Activated CD4-positive, alpha-beta T cell treated with anti-CD3 and anti-CD28 coated beads for 36 hours (primary cell): ENCODE measurements at regions of chr7 and their contacts with region 1.

Region 1: GRCh38 chr7:18345641-18346234 is 149.8 kb upstream of the HDAC9 start:
- DNase-seq: peak; percentile 49
- ATAC-seq: peak; percentile 33
- H3K4me3 Mint-ChIP-seq: no peak overlapping the region
- H3K27ac Mint-ChIP-seq: no peak overlapping the region
- H3K4me1 Mint-ChIP-seq: no peaks in the 10 kb centered on the region
- H3K27me3 Mint-ChIP-seq: peaks cover 5% of the 10 kb centered on the region

Region 2: DNA sequence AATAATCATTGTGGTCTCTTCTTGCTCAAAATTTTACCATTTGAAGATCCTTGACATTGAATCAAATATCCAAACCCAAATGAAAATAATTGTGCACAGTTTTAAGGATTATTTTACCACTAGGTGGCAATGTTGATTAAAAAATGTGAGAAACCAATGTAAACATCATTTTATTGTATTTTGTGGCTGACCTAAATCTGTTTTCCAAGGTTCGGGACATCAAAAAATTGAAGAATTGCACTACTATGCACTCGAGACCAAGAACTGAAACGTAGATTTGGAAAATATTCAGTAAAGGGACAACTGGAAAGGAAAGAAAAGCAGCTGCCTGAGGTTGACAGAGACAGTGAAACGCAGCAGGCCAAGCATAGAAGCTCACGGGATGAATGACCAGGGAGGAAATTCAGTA is 664.8 kb before region 1 on chr7:
- CTCF ChIA-PET with region 1: interaction called, 8 read pairs
- POLR2A ChIA-PET with region 1: no interaction called
- intact Hi-C with region 1: loop called (anchors 1 kb)
- DNase-seq: no peak
- ATAC-seq: no peak
- H3K4me3 Mint-ChIP-seq: no peak overlapping the region
- H3K27ac Mint-ChIP-seq: no peak overlapping the region
- H3K4me1 Mint-ChIP-seq: no peaks in the 10 kb centered on the region
- H3K27me3 Mint-ChIP-seq: no peaks in the 10 kb centered on the region

Region 3: DNA sequence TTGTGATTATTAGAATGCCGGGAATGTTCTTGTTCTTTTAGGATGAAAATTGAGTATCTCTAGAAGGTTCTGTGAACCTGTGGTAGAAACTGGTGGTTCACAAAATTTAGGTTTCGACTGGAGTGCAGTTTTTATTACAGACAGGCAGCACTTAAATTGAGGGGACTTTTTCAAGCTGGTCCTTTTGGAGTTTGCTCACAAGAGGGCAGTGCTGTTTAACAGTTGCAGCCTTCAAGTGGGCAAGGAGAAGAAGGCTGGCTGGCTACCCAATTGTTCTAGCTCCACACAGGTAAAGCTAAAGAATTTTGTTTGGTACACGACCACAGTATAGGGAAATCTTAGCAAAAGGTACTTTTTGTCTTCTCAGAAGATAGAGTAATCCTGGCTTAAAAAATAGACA is 639.0 kb before region 1 on chr7:
- CTCF ChIA-PET with region 1: no interaction called
- POLR2A ChIA-PET with region 1: no interaction called
- intact Hi-C with region 1: loop called (anchors 2 to 5 kb)
- DNase-seq: peak; percentile 55
- ATAC-seq: peak; percentile 71
- H3K4me3 Mint-ChIP-seq: no peak overlapping the region
- H3K27ac Mint-ChIP-seq: no peak overlapping the region
- H3K4me1 Mint-ChIP-seq: no peaks in the 10 kb centered on the region
- H3K27me3 Mint-ChIP-seq: peaks cover under 1% of the 10 kb centered on the region

Region 4: GRCh38 chr7:17769918-17770317 is 575.8 kb before region 1 on chr7:
- CTCF ChIA-PET with region 1: interaction called, 20 read pairs
- POLR2A ChIA-PET with region 1: no interaction called
- intact Hi-C with region 1: loop called (anchors 1 kb)
- DNase-seq: peak; percentile 75
- ATAC-seq: peak; percentile 64
- H3K4me3 Mint-ChIP-seq: no peak overlapping the region
- H3K27ac Mint-ChIP-seq: no peak overlapping the region
- H3K4me1 Mint-ChIP-seq: peaks cover 3% of the 10 kb centered on the region
- H3K27me3 Mint-ChIP-seq: no peaks in the 10 kb centered on the region

Region 5: DNA sequence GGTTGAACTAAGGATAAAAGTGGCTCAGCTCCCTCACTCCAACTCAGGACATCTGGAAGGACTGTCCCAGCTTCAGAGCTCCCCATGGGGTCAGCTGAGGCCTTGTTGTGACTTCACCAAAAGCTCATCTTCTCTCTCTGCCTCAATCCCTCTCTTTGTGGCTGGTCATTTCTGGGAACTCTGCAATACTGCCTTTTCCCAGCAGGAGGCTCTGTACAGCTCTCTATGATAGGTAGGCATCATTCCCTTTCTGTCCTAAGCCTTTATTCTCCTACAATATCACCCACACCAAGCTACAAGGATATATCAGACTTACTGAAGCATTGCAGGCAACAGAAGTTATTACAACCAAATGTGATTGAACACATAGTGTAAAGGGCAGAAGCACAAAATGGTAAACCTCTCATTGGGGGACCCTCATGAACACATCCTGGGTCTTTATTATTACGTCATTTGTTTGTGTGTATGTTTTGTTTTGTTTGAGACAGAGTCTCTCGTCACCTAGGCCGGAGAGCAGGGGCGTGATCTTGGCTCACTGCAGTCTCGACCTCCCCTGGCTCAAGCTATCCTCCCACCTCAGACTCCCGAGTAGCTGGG is 281.4 kb before region 1 on chr7:
- CTCF ChIA-PET with region 1: no interaction called
- POLR2A ChIA-PET with region 1: no interaction called
- intact Hi-C with region 1: loop called in 1 of 2 experiments (anchors 2 kb)
- DNase-seq: peak; percentile 39
- ATAC-seq: no peak
- H3K4me3 Mint-ChIP-seq: no peak overlapping the region
- H3K27ac Mint-ChIP-seq: no peak overlapping the region
- H3K4me1 Mint-ChIP-seq: no peaks in the 10 kb centered on the region
- H3K27me3 Mint-ChIP-seq: peaks cover 2% of the 10 kb centered on the region

Region 6: DNA sequence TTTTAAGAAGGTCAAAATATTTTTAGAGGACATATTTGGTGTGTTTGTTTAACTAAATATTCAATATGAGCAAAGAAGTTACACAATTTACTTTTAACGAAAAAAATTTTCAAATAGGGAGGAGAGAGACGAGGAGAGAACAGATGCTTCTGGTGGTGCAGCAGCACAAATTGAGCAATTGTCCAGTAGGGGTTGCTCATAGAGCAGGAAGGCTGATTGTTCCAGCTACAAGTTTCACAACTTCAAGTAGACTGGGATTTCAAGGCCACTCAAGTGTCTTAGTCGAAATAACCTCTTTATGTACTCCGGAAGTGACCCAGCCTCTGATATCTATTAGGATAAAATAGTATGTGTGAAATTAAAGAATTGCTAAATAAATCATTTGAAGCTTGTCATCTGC is 347.7 kb after region 1 on chr7:
- CTCF ChIA-PET with region 1: no interaction called
- POLR2A ChIA-PET with region 1: no interaction called
- intact Hi-C with region 1: no loop called
- DNase-seq: no peak
- ATAC-seq: no peak
- H3K4me3 Mint-ChIP-seq: no peak overlapping the region
- H3K27ac Mint-ChIP-seq: no peak overlapping the region
- H3K4me1 Mint-ChIP-seq: no peaks in the 10 kb centered on the region
- H3K27me3 Mint-ChIP-seq: no peaks in the 10 kb centered on the region